Activated CD4-positive, alpha-beta T cell treated with anti-CD3 and anti-CD28 coated beads, Interleukin-2, amount 10 ng/mL, durations not matched to agents 24 days and 14 days (primary cell): ENCODE measurements at regions of chr14 and their contacts with region 1.

Region 1: GRCh38 chr14:22872033-22872832 is 693 bp downstream of the LRP10 start:
- DNase-seq: peak; percentile 93
- H3K4me3 Mint-ChIP-seq: peak overlapping the region; percentile 88
- H3K27ac Mint-ChIP-seq: peak overlapping the region; percentile 89
- H3K4me1 Mint-ChIP-seq: peaks cover 18% of the 10 kb centered on the region
- H3K27me3 Mint-ChIP-seq: no peaks in the 10 kb centered on the region

Region 2: DNA sequence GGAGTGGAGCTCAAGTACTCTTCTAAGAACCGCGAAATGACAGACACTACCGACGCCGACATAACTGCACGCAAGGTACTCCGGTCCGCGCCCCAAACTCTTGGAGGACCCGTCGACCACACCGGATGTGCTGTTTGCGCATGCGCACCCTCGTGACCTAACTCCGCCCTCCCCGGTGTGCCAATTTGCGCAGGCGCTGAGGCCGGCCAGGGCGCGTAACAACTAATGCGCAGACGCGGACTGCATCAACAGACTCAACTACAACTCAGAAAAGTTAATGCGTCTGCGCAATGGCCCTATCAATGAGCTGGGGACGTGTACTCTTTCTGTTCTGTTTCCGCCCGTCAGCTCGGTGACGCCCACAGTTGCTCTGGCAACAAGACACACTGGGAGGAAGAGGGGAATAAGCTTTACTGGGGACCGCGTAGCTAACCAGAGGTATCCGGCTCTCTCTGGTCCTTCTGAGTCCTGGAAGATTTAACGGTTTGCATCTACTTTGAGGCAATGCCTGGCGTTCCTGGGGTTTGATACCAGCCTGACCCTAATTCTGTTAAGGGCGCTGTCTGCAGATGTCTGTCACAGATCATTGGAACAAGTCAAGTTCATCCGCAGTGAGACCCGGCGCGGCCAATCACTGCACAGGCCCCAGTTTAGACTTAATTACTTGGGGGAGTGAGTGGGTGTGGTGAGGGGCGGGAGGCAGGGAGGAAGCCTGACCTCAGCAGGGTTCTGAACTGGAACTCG is 283.0 kb before region 1 on chr14 and contains the start of gene DAD1:
- intact Hi-C with region 1: loop called (anchors 1 kb)
- DNase-seq: peak; percentile 100
- H3K4me3 Mint-ChIP-seq: peak within 1 kb of the TSS; percentile 87
- H3K27ac Mint-ChIP-seq: peak within 1 kb of the TSS; percentile 99
- H3K4me1 Mint-ChIP-seq: peaks cover 49% of the 10 kb centered on the region
- H3K27me3 Mint-ChIP-seq: peaks cover 10% of the 10 kb centered on the region
- total RNA-seq, gene DAD1: 255 and 266 TPM in 2 replicates

Region 3: DNA sequence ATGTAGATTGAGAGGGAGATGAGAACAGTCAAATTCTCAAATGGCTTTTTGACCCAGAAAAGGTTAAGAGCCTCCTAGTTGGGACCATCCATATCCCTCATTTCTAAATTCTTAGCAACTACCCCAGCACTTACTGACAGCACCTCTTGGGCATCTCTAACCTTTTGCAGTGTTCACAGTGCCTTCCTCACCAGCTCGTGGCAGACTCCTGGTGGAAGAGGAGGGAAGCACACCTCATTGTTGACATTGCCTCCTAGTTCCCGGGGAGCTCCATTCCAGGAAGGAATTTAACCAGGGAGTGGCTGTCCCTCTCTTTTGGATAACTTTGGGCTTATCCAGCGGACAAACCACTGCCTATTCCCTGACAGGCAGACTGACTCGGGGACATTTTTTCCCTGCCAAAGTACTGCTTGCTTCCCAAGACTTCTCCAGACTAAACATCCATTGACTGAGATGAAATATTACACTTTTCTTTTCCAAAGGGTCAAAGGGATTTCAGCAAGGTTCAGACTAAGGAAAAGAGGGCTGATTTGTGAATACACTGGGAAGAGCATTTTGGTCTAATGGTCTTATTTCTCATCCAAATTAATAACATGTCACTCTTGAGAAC is 219.1 kb before region 1 on chr14:
- intact Hi-C with region 1: no loop called
- DNase-seq: peak; percentile 85
- H3K4me3 Mint-ChIP-seq: no peak overlapping the region
- H3K27ac Mint-ChIP-seq: no peak overlapping the region
- H3K4me1 Mint-ChIP-seq: no peaks in the 10 kb centered on the region
- H3K27me3 Mint-ChIP-seq: no peaks in the 10 kb centered on the region

Region 4: GRCh38 chr14:22726012-22726411 is 146.2 kb before region 1 on chr14:
- intact Hi-C with region 1: no loop called
- DNase-seq: no peak
- H3K4me3 Mint-ChIP-seq: no peak overlapping the region
- H3K27ac Mint-ChIP-seq: no peak overlapping the region
- H3K4me1 Mint-ChIP-seq: no peaks in the 10 kb centered on the region
- H3K27me3 Mint-ChIP-seq: peaks cover 5% of the 10 kb centered on the region

Region 5: DNA sequence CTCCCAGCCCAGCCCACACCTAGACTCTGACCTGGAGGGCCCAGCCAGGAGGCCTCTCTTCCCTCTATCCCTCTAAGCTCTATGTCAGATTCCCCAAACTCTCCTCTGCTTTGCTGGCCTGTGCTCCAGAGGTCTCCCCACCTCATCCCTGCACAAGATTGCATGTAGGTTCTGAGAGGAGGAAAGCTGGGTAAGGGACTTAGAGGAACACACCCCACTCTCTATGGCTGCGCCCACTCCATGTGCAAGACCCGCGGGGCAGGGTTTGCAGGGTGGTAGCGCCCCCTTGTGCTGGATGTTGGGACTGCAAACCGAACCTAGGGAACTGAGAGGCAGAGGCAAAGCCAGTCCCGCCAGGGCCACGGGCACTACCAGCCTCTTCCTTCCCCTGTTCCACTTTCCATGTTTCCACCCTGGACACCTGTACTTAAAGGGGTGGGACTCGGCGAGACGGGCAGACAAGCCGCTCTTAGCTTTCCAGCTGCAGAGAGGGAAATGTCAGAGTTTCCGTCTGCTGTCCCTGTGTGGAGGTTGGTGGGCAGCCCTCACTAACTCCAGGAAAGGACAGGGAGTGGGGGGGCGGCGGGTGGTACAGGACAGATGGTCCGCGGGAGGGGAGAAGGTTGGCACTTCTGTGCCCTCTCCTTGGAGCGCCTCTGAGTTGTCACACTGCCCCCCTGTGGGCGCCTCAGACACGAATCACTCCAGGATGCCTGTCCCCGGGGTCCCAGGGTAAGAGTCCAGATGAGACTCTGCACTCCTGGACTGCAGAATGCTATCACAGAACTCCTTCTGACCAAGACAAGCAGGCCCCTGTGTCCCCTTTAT is 19.1 kb before region 1 on chr14:
- intact Hi-C with region 1: loop called (anchors 2 kb)
- DNase-seq: peak; percentile 97
- H3K4me3 Mint-ChIP-seq: peak overlapping the region; percentile 87
- H3K27ac Mint-ChIP-seq: peak overlapping the region; percentile 78
- H3K4me1 Mint-ChIP-seq: peaks cover 33% of the 10 kb centered on the region
- H3K27me3 Mint-ChIP-seq: peaks cover 10% of the 10 kb centered on the region

Region 6: GRCh38 chr14:22900081-22900799 is 28.0 kb after region 1 on chr14:
- intact Hi-C with region 1: loop called (anchors 1 kb)
- DNase-seq: peak; percentile 87
- H3K4me3 Mint-ChIP-seq: no peak overlapping the region
- H3K27ac Mint-ChIP-seq: peak overlapping the region; percentile 1
- H3K4me1 Mint-ChIP-seq: peaks cover 14% of the 10 kb centered on the region
- H3K27me3 Mint-ChIP-seq: no peaks in the 10 kb centered on the region

Region 7: DNA sequence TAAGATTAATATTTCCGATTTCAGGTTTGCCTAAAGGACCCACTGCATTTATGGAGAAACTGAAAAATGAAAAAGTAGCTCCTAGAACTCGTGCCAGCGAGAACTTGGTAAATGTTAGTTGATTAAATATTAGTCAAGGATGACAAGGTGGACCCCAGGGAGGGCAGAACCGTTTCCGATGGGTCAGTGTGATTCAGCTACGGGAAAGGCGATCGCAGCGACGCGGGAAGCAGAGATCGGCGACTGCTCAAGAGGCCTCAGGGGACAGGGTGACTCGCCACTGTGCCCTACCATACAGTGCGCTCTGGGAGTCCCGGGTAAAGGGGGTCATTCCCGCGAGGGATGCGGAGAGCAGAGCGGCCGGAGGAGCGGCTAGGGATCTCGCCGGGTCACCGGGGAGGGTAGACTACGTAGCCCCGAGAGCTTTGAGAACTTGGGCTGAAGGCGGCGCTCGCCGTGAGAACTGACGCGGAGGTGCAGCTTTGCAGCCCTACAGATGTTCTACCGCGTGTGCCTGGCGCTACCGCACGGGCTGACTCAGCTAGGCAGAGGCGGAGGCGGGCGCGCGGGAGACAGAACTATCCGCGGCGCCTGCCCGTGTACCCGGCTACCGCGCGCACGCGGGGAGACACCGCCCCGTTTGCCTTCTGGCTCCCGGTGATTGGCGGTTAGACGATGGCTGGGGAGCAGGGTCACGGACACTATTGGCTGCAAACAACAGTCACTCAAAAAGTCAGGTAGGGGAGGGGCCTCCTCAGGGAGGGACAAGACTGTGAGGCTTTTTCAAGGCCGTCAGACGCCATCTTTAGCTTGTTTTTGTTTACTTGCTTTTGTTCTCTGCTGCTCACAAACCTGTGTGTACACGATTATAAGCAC is 134.5 kb after region 1 on chr14:
- intact Hi-C with region 1: loop called (anchors 2 kb)
- DNase-seq: peak; percentile 99
- H3K4me3 Mint-ChIP-seq: peak overlapping the region; percentile 92
- H3K27ac Mint-ChIP-seq: peak overlapping the region; percentile 95
- H3K4me1 Mint-ChIP-seq: peaks cover 36% of the 10 kb centered on the region
- H3K27me3 Mint-ChIP-seq: no peaks in the 10 kb centered on the region

Region 8: GRCh38 chr14:23041729-23042128 is 169.5 kb after region 1 on chr14:
- intact Hi-C with region 1: no loop called
- DNase-seq: no peak
- H3K4me3 Mint-ChIP-seq: no peak overlapping the region
- H3K27ac Mint-ChIP-seq: no peak overlapping the region
- H3K4me1 Mint-ChIP-seq: no peaks in the 10 kb centered on the region
- H3K27me3 Mint-ChIP-seq: no peaks in the 10 kb centered on the region